ENCODE measurements at regions of chr22 and their contacts with region 1.

Region 1: DNA sequence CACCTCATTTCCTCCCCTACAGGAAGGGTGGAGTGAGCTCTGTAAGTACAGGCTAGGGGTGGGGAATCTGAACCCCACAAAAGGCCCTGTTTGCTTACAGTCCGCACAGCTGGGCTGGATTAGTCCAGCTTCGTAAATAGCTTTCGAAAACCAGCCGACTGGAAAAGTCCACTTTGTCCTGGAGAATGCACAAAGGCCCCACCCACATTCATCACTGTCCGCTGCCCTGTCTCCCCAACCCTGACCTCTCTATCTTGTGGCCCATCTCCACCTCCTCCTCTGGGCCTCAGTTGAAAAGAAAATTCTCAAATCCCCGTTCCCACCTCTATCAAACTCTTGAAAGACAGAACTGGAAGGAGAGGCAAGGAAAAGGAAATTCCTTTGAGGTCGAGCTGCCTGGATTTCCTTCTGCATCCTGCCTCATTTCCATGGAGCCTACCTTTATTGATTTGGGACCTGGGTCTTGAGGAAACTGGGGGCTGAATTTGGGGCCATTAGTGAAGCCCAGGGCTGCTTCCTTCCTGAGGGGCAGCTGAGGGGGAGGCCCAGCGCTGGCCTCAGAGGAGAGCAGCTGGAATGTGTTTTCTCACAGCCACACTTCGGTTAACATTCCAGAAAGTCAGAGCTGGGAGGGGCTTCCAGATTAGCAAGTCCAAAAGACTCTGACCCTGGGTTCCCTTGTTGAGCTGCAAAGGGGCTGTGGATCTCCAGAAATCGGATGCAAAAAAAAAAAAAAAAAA is 147.6 kb downstream of the FBXO7 start:
- DNase-seq: peak; percentile 81
- H3K4me3 ChIP-seq: peak overlapping the region; percentile 4; the same call in 1 of the 2 replicates
- H3K27me3 ChIP-seq: 0 out of 2 replicates have a peak, but pooled peaks cover 1% of the 10 kb centered on the region
- CTCF ChIP-seq: no peak

Region 2: DNA sequence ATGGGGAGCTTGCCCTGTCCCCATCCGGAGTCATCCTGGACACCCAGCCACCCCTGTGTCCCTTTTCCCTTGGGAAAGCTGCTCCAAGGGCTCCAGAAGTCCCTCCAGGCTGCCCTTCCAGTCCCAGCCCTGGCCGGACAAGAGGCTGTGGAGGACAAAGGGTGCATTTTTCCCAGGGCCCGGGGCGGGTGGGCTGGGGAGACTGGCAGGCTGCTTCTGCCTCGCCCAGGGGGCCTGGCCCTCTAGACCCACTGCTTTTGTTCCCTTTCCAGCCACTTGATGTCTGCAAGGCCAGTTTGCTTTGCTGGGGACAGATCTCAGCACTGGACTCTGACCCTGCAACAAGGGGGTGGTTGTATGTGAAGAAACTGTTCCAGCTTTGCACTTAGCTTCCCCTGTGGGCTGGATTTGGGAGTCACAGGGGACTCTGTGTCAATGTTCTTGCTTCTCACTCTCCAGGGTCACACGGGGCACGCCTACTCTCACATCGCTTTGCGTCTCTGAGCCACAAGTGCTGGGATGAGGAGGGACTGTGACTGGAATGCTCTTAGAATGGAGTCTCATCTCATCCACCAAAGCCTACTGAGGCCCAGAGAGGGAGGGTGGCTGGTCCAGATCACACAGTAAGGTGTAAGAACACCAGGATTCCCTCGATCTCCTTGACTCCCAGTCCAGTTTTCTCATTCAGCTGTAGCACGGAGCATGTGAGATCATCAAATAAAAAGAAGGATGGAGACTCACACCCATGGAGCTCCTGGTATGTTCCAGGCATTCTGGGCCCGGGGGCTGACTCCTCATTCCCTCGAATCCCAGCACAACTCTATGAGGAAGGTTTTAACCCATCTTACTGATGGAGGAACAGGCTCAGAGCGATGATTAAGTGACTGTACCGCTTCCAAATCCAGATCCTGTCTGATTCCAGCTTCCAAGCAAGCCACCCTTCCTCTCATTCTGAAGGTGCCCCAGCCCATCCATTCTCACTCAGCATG is 87.6 kb before region 1 on chr22:
- CTCF ChIA-PET with region 1: interaction called, 9 read pairs
- POLR2A ChIA-PET with region 1: interaction called, 11 read pairs
- DNase-seq: peak; percentile 50
- H3K4me3 ChIP-seq: no peak overlapping the region
- H3K27me3 ChIP-seq: no peaks in the 10 kb centered on the region
- CTCF ChIP-seq: no peak

Region 3: GRCh38 chr22:32788909-32789624 is 166.9 kb after region 1 on chr22:
- CTCF ChIA-PET with region 1: interaction called, 119 read pairs
- POLR2A ChIA-PET with region 1: interaction called, 19 read pairs
- DNase-seq: no peak
- H3K4me3 ChIP-seq: no peak overlapping the region
- H3K27me3 ChIP-seq: no peaks in the 10 kb centered on the region
- CTCF ChIP-seq: no peak

Measured in BJ (cell line).